Vagina (tissue), 2 donors: ENCODE measurements at regions of chr13 and their contacts with region 1.

Region 1: GRCh38 chr13:111174377-111175114 is 59.4 kb downstream of the ARHGEF7 start:
- DNase-seq: no peak
- H3K4me3 ChIP-seq: no peak overlapping the region
- H3K27ac ChIP-seq: no peak overlapping the region
- H3K4me1 ChIP-seq: peaks cover 67% of the 10 kb centered on the region
- H3K27me3 ChIP-seq: no peaks in the 10 kb centered on the region
- CTCF ChIP-seq: no peak
- POLR2A ChIP-seq: no peak

Region 2: GRCh38 chr13:110628477-110628793 is 546.1 kb before region 1 on chr13:
- intact Hi-C with region 1: loop called (anchors 5 kb)
- DNase-seq: no peak
- H3K4me3 ChIP-seq: no peak overlapping the region
- H3K27ac ChIP-seq: no peak overlapping the region
- H3K4me1 ChIP-seq: peaks cover 44% of the 10 kb centered on the region
- H3K27me3 ChIP-seq: no peaks in the 10 kb centered on the region
- CTCF ChIP-seq: no peak
- POLR2A ChIP-seq: no peak

Region 3: DNA sequence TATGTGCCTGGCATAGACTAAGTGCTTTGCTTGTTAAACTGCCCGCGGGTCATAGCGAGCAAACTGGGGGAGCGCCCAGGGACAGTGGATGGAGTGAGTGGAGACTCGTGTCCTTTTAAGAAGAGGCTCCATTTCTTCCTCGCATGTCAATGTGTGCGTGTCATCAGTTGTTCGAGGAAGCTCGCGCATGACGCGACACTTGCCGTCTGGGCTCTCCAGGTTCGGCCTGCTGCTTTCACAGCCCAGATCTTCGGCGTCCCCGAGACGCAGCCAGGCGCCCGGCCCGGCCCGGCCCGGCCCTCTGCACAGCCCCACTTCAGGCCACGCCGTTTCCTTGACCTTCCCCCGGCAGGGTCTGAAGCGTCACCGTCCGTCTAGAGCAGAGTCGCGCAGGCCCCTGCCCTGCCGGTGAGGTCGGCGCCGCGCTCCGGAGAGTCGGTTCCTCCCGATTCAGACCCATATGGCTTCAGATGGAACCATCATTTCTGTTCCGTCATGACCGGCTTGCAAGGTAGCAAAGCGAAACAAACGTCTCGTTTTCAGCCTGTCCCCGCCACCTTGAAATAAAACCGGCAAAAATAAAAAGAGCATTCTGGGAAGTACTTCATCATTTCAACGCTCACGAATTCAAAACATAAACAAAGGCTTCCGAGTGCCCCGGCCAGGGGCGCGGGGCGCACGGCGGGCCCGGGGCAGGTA is 60.0 kb before region 1 on chr13:
- intact Hi-C with region 1: no loop called
- DNase-seq: no peak
- H3K4me3 ChIP-seq: peak overlapping the region; percentile 52 to 69
- H3K27ac ChIP-seq: peak overlapping the region; percentile 89
- H3K4me1 ChIP-seq: peaks cover 38% of the 10 kb centered on the region
- H3K27me3 ChIP-seq: no peaks in the 10 kb centered on the region
- CTCF ChIP-seq: no peak
- POLR2A ChIP-seq: peak in 1 of 2 donors; percentile 6